ENCODE measurements at regions of chr22 and their contacts with region 1.

Region 1: GRCh38 chr22:37608477-37609239 is at the start of gene GGA1:
- DNase-seq: peak; percentile 90
- H3K4me3 ChIP-seq: peak within 1 kb of the TSS; percentile 82
- H3K27ac ChIP-seq: peak within 1 kb of the TSS; percentile 99
- H3K27me3 ChIP-seq: peaks cover 12% of the 10 kb centered on the region
- CTCF ChIP-seq: no peak
- polyA plus RNA-seq, gene GGA1: 24.7 and 26.1 TPM in 2 replicates

Region 2: DNA sequence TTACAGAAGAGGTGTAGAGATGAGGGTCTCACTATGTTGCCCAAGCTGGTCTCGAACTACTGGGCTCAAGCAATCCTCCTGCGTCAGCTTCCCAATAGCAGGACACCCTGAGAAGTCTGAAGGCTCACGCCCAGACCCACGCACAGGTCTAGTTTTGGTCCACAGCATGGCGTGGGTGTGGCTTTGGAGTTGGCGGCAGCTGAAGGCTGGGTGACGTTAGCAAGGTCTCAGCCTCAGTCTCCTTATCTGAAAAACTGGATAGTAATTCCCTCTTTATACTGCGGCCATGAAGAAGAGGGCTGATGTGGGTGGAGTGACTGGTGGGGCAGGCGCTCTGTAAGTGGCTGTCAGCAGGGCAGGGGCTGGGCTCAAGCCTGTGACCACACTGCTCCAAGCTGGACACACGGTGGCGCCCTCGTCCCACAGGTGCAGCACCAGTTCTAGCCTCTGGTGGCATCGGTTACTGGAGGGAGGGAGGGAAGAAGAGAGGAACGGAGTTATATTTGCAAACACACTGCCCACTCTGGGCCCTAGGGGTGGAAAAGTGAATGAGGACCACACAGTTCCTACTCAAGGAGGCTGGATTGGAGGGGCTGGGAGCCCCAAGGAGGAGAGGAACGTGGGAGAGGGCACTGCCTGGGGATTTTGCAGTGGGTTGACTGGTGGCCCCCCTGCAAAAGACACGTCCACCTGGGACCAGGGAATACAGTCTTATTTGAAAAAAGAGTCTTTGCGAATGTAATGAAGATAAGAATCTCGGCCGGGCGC is 69.9 kb before region 1 on chr22:
- CTCF ChIA-PET with region 1: interaction called, 60 read pairs
- POLR2A ChIA-PET with region 1: no interaction called
- DNase-seq: peak; percentile 89
- H3K4me3 ChIP-seq: no peak overlapping the region
- H3K27ac ChIP-seq: no peak overlapping the region
- H3K27me3 ChIP-seq: no peaks in the 10 kb centered on the region
- CTCF ChIP-seq: peak; percentile 91

Region 3: DNA sequence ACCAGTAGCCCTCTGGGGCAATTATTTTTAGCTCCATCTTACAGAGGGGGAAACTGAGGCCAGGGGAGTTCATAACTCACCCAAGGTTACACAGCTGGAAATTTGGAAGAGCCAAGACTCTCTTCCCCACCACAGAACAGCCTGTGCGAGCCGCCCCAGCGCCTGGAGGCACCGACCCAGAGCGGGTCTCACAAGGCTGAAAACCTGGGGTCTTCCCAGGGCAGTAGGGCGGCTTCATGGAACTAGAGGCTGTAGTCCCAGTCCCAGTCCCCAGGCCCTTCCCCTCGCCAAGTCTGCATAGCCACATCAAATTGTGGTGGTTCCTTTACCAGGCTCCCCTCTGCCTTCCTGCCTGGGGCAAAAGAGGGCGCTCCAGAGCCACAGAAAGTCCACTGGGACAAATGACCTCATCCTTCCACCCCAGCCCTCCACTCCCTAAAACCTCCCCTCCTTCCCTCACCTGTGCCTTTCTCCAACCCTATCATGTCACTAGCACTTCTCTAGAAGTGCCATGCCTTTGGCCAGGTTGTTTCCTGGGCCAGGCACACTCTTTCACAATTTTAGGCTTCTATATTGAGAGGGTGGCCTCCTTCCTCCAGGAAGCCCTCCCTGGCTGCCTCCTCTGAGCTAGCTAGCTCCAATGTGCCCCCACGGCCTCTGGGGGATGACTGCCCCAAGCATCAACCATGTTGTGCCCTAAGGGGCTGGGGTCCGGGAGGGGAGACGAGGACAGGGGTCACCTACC is 63.5 kb before region 1 on chr22:
- CTCF ChIA-PET with region 1: interaction called, 60 read pairs
- POLR2A ChIA-PET with region 1: interaction called, 13 read pairs
- DNase-seq: no peak
- H3K4me3 ChIP-seq: peak overlapping the region; percentile 50
- H3K27ac ChIP-seq: peak overlapping the region; percentile 91
- H3K27me3 ChIP-seq: no peaks in the 10 kb centered on the region
- CTCF ChIP-seq: peak; percentile 83

Region 4: DNA sequence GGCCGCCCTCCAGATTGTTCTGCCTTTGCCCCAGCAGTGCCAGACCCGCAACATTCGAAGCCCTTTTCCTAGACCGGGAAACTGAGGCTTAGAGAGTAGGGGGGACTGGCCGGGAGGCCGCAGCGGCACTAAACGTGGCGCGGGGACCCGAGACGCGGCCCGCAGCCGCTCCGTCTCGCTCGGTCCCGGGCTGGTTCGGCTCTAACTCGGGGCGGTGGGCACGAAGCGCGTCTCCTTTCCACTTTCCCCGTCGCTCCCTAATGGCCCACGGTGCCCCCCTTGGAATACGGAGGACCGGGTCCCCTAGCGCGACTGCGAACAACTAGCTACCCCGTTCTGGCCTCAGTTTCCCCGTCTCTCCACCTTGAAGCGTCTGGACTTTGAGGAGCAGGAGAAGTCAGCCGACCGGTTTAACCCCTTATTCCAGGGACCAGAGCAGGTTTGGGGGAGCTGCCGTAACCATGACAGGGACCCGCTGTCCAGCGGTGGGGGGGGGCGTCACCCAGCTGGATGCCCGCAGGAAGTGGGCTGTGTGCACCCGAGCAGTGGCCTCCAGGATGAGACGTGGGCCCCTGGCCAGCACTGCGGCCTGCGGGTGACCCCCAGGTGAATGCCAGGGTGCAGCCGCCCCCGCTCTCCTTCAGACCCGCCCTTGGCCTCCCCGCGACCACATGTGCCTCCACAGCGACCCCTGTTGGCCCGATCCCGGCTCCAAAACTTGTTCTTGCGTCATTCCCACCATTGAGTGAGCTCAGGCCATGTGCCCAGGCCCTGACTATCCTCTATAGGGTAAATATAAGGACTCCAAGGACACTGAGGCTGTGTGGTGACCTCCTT is 47.2 kb before region 1 on chr22:
- CTCF ChIA-PET with region 1: interaction called, 10 read pairs
- POLR2A ChIA-PET with region 1: interaction called, 3 read pairs
- DNase-seq: peak; percentile 63
- H3K4me3 ChIP-seq: peak overlapping the region; percentile 82
- H3K27ac ChIP-seq: peak overlapping the region; percentile 94
- H3K27me3 ChIP-seq: peaks cover 3% of the 10 kb centered on the region
- CTCF ChIP-seq: peak; percentile 84

Region 5: DNA sequence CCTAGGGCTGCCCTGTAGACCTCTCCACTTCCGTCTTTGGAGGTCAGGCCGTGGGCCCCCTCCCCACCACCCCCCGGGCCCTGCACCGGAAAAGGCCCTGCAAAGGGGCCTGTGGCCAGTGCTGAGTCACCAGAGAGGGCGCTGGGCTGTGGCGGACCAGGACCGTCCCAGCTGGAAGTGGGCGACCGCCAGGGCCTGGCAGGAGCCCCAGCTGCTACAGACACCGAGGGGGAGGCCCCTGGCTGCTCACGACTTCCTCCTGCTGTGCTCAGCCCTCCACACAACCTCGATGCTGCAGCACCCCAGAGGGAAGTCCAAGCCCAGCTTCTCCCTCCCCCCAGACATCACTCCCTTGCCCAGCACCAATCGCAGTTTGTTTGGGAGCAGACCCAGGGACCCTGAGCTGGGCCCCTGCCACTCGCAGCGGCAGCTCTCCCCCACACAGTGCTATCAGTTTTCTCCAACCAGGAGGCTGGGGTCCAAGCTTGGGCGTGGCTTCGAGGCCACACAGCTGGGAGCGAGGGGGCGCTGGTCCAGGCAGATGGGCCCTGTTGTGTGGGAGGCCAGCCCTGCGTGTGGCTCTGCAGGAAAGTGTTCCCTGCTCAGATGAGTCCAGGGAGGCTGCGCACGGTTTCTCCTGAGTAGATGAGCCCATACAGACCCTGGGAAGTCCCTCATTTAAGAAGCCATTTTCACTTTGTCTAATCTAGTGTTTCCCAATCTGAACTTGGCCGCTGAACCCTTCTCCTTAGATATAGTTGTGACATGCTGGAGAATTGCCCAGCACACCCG is 25.2 kb after region 1 on chr22:
- CTCF ChIA-PET with region 1: interaction called, 13 read pairs
- POLR2A ChIA-PET with region 1: interaction called, 8 read pairs
- DNase-seq: peak; percentile 84
- H3K4me3 ChIP-seq: peak overlapping the region; percentile 29
- H3K27ac ChIP-seq: peak overlapping the region; percentile 91
- H3K27me3 ChIP-seq: no peaks in the 10 kb centered on the region
- CTCF ChIP-seq: peak; percentile 23

Region 6: GRCh38 chr22:37650463-37651136 is 41.9 kb after region 1 on chr22:
- CTCF ChIA-PET with region 1: no interaction called
- POLR2A ChIA-PET with region 1: no interaction called
- DNase-seq: no peak
- H3K4me3 ChIP-seq: no peak overlapping the region
- H3K27ac ChIP-seq: no peak overlapping the region
- H3K27me3 ChIP-seq: no peaks in the 10 kb centered on the region
- CTCF ChIP-seq: no peak

Region 7: GRCh38 chr22:37768273-37768672 is 159.6 kb after region 1 on chr22:
- CTCF ChIA-PET with region 1: no interaction called
- POLR2A ChIA-PET with region 1: no interaction called
- DNase-seq: no peak
- H3K4me3 ChIP-seq: no peak overlapping the region
- H3K27ac ChIP-seq: no peak overlapping the region
- H3K27me3 ChIP-seq: no peaks in the 10 kb centered on the region
- CTCF ChIP-seq: peak; percentile 40

Measured in AG04450 (cell line).